ENCODE measurements at regions of chr1 and their contacts with region 1.

Region 1: DNA sequence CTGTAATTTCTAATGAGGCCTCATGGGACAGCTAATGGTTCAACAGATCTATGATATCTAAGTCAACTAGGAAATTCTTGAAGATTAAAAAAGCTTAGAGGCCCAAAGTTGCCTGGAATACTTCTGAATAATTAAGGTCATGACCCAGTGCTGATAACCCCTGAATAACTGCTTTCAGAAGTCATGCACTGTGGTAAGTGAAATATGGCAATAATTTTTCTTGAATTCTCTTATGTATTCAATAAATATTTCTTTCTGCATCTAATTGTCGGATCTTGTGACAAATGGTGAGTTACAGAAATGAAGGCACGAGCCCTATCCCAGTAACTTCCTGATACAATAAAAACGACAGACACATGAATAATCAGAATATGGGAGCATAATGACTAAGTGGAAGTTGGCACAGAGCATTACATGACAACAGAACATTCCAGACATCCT is 219.3 kb upstream of the GREM2 start:
- DNase-seq: peak in 1 of 2 experiments; percentile 8
- H3K4me3 ChIP-seq: no peak overlapping the region
- H3K4me3 Mint-ChIP-seq: no peak overlapping the region
- H3K27ac Mint-ChIP-seq: no peak overlapping the region
- H3K4me1 ChIP-seq: peaks cover 17% of the 10 kb centered on the region
- H3K4me1 Mint-ChIP-seq: peaks cover 7% of the 10 kb centered on the region
- H3K27me3 ChIP-seq: no peaks in the 10 kb centered on the region
- H3K27me3 Mint-ChIP-seq: no peaks in the 10 kb centered on the region
- CTCF ChIP-seq: no peak

Region 2: GRCh38 chr1:240644732-240645131 is 186.5 kb before region 1 on chr1:
- CTCF ChIA-PET with region 1: no interaction called
- POLR2A ChIA-PET with region 1: no interaction called
- intact Hi-C with region 1: no loop called
- DNase-seq: no peak
- H3K4me3 ChIP-seq: no peak overlapping the region
- H3K4me3 Mint-ChIP-seq: no peak overlapping the region
- H3K27ac Mint-ChIP-seq: no peak overlapping the region
- H3K4me1 ChIP-seq: peaks cover 4% of the 10 kb centered on the region; the same call in 1 of the 2 replicates
- H3K4me1 Mint-ChIP-seq: peaks cover 10% of the 10 kb centered on the region
- H3K27me3 ChIP-seq: no peaks in the 10 kb centered on the region
- H3K27me3 Mint-ChIP-seq: no peaks in the 10 kb centered on the region
- CTCF ChIP-seq: no peak

Region 3: DNA sequence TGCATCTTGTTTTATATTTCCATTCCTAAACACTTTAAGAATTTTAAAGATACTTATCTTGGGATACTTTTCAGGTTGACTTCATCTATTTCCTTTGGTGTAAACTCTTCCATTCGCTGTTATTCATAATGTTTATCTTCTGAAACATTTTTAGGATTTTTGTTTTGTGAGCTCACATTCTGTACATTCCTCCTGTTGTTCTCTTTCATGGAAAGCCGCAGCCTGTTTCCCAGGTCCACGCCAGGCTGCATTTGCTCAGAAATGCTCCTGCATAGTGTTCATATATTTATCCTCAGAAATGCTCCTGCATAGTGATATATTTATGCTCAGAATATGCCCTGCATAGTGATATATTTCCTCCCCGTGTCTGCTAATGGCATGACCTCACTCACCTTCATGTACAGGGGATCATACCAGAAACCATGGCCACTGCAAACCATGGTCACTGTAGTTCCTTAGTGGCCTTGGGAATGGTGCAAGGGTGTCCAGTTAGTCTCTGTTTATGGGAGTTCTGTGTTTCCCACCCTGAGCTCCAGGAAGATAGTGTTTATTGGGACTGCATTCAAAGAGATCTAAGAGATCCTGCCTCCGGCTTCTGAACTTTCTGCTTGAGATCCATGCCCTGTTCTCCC is 65.4 kb before region 1 on chr1:
- CTCF ChIA-PET with region 1: no interaction called
- POLR2A ChIA-PET with region 1: no interaction called
- intact Hi-C with region 1: loop called (anchors 1 kb)
- DNase-seq: peak; percentile 55 to 56
- H3K4me3 ChIP-seq: no peak overlapping the region
- H3K4me3 Mint-ChIP-seq: peak overlapping the region; percentile 43
- H3K27ac Mint-ChIP-seq: peak overlapping the region; percentile 96
- H3K4me1 ChIP-seq: peaks cover 21% of the 10 kb centered on the region
- H3K4me1 Mint-ChIP-seq: peaks cover 17% of the 10 kb centered on the region
- H3K27me3 ChIP-seq: no peaks in the 10 kb centered on the region
- H3K27me3 Mint-ChIP-seq: no peaks in the 10 kb centered on the region
- CTCF ChIP-seq: no peak